ENCODE measurements at regions of chr16 and their contacts with region 1.

Region 1: DNA sequence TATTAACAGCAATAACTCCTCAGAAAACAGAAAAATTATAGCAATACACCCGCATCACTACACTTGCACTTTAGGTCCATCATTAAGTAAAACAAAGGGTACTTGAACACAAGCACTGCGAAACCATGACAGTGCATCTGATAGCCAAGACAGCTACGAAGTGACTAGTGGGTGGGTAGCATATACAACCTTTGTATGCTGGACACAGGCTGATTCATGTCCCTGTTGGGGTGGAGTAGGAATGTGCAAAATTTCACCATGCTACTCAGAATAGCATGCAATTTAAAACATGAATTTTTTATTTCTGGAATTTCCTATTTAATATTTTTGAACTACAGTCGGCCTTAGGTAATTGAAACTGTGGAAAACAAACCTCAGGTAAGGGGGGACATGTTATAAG is 2414.1 kb downstream of the TP53TG3F start:
- DNase-seq: no peak
- ATAC-seq: no peak
- H3K4me3 ChIP-seq: no peak overlapping the region
- H3K4me3 Mint-ChIP-seq: no peak overlapping the region
- H3K27ac ChIP-seq: no peak overlapping the region
- H3K27ac Mint-ChIP-seq: no peak overlapping the region
- H3K4me1 ChIP-seq: no peaks in the 10 kb centered on the region
- H3K4me1 Mint-ChIP-seq: no peaks in the 10 kb centered on the region
- H3K27me3 ChIP-seq: no peaks in the 10 kb centered on the region
- H3K27me3 Mint-ChIP-seq: no peaks in the 10 kb centered on the region
- CTCF ChIP-seq: no peak

Region 2: DNA sequence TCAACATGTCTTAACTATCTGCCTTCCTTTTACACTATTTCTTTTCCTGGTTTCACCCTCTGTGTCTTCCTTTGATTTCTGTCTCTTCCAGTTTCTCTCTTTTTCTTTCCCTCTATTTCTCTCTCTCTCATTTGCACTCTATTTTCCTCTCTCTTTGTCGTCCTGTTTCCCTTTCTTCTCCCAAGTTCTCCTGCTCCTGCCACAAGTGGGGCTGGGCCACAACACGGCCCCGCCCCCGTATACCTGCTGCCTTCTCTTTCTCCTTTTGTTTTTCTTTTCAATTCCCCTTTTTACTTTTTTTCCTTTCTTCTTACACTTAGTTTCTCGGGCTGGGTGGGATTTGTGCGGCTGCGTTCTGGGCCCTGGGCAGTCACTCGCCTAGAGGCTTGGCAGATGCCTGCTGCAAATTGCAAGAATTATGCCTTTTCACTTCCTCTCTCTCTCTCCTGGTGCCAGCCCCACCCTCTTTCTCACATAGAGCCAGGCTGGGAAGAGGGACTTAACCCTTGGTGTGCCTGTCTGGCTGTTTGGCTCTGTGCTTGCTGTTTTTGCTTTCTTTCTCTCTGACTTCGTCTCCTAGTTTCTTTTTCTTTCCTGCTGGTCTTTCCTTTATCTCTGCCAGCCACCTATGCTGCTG is 274.7 kb before region 1 on chr16:
- CTCF ChIA-PET with region 1: no interaction called
- POLR2A ChIA-PET with region 1: no interaction called
- intact Hi-C with region 1: no loop called
- DNase-seq: no peak
- ATAC-seq: no peak
- H3K4me3 ChIP-seq: no peak overlapping the region
- H3K4me3 Mint-ChIP-seq: no peak overlapping the region
- H3K27ac ChIP-seq: no peak overlapping the region
- H3K27ac Mint-ChIP-seq: no peak overlapping the region
- H3K4me1 ChIP-seq: no peaks in the 10 kb centered on the region
- H3K4me1 Mint-ChIP-seq: no peaks in the 10 kb centered on the region
- H3K27me3 ChIP-seq: no peaks in the 10 kb centered on the region
- H3K27me3 Mint-ChIP-seq: no peaks in the 10 kb centered on the region
- CTCF ChIP-seq: no peak

Region 3: GRCh38 chr16:35862242-35862641 is 11.2 kb before region 1 on chr16:
- CTCF ChIA-PET with region 1: no interaction called
- POLR2A ChIA-PET with region 1: no interaction called
- intact Hi-C with region 1: loop called in 1 of 2 experiments (anchors 2 kb)
- DNase-seq: no peak
- ATAC-seq: no peak
- H3K4me3 ChIP-seq: no peak overlapping the region
- H3K4me3 Mint-ChIP-seq: no peak overlapping the region
- H3K27ac ChIP-seq: no peak overlapping the region
- H3K27ac Mint-ChIP-seq: no peak overlapping the region
- H3K4me1 ChIP-seq: no peaks in the 10 kb centered on the region
- H3K4me1 Mint-ChIP-seq: no peaks in the 10 kb centered on the region
- H3K27me3 ChIP-seq: no peaks in the 10 kb centered on the region
- H3K27me3 Mint-ChIP-seq: no peaks in the 10 kb centered on the region
- CTCF ChIP-seq: no peak